ENCODE measurements at regions of chr6 and their contacts with region 1.

Region 1: GRCh38 chr6:76684875-76685274 is 612.4 kb upstream of the IMPG1 start:
- DNase-seq: no peak
- H3K4me3 ChIP-seq: no peak overlapping the region
- H3K27me3 ChIP-seq: no peaks in the 10 kb centered on the region
- CTCF ChIP-seq: no peak

Region 2: GRCh38 chr6:76843054-76843822 is 158.4 kb after region 1 on chr6:
- CTCF ChIA-PET with region 1: no interaction called
- POLR2A ChIA-PET with region 1: no interaction called
- DNase-seq: no peak
- H3K4me3 ChIP-seq: no peak overlapping the region
- H3K27me3 ChIP-seq: no peaks in the 10 kb centered on the region
- CTCF ChIP-seq: no peak

Region 3: DNA sequence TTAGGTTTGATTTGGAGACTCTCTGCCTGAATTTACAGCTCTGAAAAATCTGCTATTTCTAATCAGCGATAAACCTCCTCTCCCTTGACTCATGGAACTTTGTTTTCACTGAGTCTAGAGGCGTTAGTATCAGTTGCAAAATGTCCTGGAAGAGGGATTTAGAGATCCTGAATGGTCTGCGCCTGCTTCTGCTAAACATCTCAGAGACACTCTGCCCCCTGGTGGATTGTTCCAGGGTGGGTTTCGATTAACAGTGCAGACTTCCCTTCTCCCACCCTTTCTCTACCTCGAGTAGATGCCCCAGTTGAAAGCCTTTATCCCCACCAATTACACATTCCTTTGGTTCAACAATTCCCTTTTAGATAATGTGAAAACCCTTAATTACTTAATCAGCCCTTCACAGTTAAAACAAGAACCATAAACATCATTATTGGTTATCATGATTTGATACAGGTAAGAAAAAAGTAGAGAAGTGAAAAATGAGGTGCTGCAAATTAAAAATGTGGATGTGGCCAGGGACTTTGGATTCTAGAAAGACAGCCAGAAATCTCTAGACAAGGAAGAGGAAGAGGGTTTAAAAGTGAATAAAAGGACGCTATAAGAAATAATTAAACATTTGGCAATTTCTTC is 773.0 kb after region 1 on chr6:
- CTCF ChIA-PET with region 1: interaction called, 12 read pairs
- POLR2A ChIA-PET with region 1: no interaction called
- DNase-seq: peak; percentile 36
- H3K4me3 ChIP-seq: no peak overlapping the region
- H3K27me3 ChIP-seq: 0 out of 2 replicates have a peak, but pooled peaks cover 1% of the 10 kb centered on the region
- CTCF ChIP-seq: peak; percentile 76

Region 4: DNA sequence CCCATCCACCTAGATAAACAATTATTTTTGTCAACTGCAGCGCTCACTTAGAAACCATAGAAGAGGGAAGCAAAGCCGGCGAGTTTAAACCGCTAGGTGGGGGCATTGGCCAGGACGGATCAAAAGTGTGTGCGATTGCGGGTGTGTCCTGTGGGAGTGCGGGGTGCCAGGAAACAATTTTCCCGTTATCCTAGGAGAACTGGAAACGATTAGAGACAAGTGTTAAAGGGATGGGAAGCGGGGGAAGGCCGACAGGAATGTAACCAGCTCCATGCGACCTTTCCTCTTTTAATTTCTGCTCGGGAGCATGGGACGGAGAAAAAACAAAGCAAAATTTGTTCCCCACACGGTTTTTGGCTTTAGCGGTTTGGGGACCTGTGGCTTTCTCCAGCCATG is 781.2 kb after region 1 on chr6:
- CTCF ChIA-PET with region 1: interaction called, 11 read pairs
- POLR2A ChIA-PET with region 1: no interaction called
- DNase-seq: no peak
- H3K4me3 ChIP-seq: peak overlapping the region; percentile 49
- H3K27me3 ChIP-seq: peaks cover 11% of the 10 kb centered on the region
- CTCF ChIP-seq: peak; percentile 82

Measured in BJ (cell line).